GM12878 (cell line): ENCODE measurements at regions of chr22 and their contacts with region 1.

Region 1: DNA sequence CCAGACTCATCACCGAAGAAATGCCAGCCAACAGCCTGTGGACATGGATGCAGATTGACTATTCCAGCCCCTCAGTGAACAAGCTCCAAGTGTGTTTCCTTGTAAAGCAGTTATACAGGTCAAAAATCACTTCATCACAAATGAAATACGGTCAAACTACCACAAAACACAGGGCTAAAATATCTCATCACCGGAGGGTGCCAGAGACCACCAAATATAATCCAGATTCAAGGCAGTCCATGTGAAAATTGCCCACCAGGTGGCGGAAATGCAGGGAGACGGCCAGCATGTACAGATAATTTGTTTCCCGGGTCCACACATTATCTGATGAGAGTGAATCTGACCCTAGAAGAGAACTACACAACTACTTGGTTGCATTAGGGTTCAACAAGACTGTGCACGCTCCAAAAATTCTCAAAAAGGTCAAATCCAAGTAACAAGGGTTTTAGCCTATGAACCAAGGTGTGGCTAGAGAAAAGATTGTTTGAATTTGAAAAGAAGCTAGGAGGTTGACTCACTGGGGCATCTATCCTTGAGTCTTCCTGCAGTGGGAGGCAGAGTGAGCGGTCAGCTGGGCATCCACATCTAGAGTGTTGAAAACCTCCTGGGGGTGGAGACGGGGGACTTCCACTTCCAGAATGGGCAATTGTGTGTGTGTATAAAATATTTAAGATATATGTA is 71.7 kb downstream of the IGLL5 start:
- DNase-seq: peak; percentile 56
- ATAC-seq: peak; percentile 66
- H3K4me3 ChIP-seq: no peak overlapping the region
- H3K27ac ChIP-seq: no peak overlapping the region
- H3K4me1 ChIP-seq: peaks cover 11% of the 10 kb centered on the region
- H3K27me3 ChIP-seq: no peaks in the 10 kb centered on the region
- CTCF ChIP-seq: peak; percentile 81 to 100 (median 95); a peak in 5 of 6 replicates
- EP300 ChIP-seq: no peak
- POLR2A ChIP-seq: no peak
- RAD21 ChIP-seq: peak; percentile 100

Region 2: DNA sequence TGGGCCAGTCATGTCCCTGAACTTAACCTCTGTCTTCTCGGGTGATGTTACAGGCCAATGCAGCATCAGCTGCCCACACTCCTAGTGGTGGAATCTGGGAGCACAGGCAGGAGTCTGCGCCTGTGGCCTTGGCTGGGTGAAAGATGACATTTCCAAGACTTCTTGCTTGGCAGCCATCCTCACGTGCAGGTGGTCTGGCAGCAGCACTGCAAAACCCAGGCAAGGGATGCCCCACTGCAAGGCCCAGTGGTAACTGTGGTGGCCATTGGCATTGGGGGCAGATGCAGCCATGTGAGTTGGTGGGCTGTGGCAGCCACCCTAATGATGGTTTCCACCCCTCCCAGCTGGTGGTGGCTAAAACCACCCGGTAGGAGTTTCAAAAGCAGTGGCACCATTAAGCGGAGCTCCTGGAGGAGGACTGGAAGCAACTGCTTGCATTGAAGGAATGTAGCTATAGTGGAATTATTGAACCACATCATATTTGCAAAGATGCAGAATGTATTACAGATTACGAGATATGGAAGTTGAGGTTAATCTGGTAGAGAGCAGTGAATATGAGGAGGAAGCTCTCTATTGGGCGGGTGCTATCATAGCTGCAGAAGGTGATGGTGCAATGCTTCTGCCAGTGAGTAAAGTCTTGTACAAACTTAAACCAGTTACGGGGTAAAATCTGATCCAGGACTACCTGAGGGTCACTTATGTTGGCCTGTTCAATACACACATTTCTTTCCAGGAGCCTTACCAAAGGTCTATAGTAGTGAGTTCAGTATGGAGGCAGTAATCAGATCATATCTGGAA is 856.0 kb before region 1 on chr22:
- CTCF ChIA-PET with region 1: interaction called, 23 read pairs
- POLR2A ChIA-PET with region 1: no interaction called
- RAD21 ChIA-PET with region 1: interaction called, 20 read pairs
- SMC1A ChIA-PET with region 1: interaction called, 43 read pairs
- in situ Hi-C with region 1: no loop called
- intact Hi-C with region 1: no loop called
- DNase-seq: no peak
- ATAC-seq: 0 out of 3 replicates have a peak, but pooled peaks have one; percentile 18
- H3K4me3 ChIP-seq: no peak overlapping the region
- H3K27ac ChIP-seq: no peak overlapping the region
- H3K4me1 ChIP-seq: peaks cover 9% of the 10 kb centered on the region
- H3K27me3 ChIP-seq: no peaks in the 10 kb centered on the region
- CTCF ChIP-seq: peak; percentile 17 to 60 (median 30); a peak in 5 of 6 replicates
- EP300 ChIP-seq: no peak
- POLR2A ChIP-seq: no peak
- RAD21 ChIP-seq: no peak

Region 3: GRCh38 chr22:22748297-22748743 is 211.0 kb before region 1 on chr22:
- CTCF ChIA-PET with region 1: interaction called, 86 read pairs
- POLR2A ChIA-PET with region 1: interaction called, 4 read pairs
- RAD21 ChIA-PET with region 1: interaction called, 41 read pairs
- SMC1A ChIA-PET with region 1: interaction called, 27 read pairs
- in situ Hi-C with region 1: no loop called
- intact Hi-C with region 1: loop called (anchors 1 kb)
- DNase-seq: no peak
- ATAC-seq: peak; percentile 79
- H3K4me3 ChIP-seq: no peak overlapping the region
- H3K27ac ChIP-seq: no peak overlapping the region
- H3K4me1 ChIP-seq: no peaks in the 10 kb centered on the region; the same call in 1 of the 2 replicates
- H3K27me3 ChIP-seq: no peaks in the 10 kb centered on the region
- CTCF ChIP-seq: peak; percentile 47 to 60 (median 56)
- EP300 ChIP-seq: no peak
- POLR2A ChIP-seq: no peak
- RAD21 ChIP-seq: no peak

Region 4: DNA sequence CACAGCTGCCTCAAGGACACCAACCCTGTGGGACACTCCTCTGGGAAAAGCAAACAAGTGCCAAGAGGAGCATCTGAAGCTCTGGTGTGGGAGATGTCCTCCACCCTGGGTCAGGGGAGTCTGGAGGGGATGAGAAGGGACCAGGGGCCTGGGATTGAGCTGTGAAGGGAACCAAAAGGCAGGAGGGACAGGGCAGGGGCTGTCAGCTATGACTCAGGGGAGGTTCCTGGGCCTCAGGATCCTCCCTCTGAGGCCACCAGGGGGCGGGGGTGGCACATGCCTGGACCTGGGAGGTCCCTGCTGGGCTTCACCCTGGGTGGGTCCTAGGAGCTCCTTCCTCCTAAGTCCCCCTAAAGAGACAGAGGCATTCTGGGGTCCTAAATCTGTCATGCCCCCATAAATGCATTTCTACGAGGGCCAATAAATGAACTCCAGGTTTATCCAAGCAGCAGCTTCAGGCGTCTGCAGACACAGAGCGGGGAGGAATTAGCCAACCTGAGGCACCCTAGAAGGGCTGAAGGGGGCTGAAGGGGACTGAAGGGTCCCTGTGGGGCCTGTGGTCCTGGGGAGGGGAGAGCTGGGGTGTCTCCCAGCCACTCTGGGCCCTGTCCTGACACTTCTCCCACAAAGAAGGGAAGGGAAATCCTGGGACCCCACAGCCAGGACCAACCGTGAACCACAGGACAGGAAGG is 103.5 kb before region 1 on chr22:
- CTCF ChIA-PET with region 1: interaction called, 264 read pairs
- POLR2A ChIA-PET with region 1: interaction called, 9 read pairs
- RAD21 ChIA-PET with region 1: interaction called, 174 read pairs
- SMC1A ChIA-PET with region 1: interaction called, 201 read pairs
- in situ Hi-C with region 1: no loop called
- intact Hi-C with region 1: no loop called
- DNase-seq: no peak
- ATAC-seq: peak; percentile 95
- H3K4me3 ChIP-seq: no peak overlapping the region
- H3K27ac ChIP-seq: peak overlapping the region; percentile 73
- H3K4me1 ChIP-seq: no peaks in the 10 kb centered on the region
- H3K27me3 ChIP-seq: no peaks in the 10 kb centered on the region
- CTCF ChIP-seq: peak; percentile 27 to 70 (median 60); a peak in 5 of 6 replicates
- EP300 ChIP-seq: no peak
- POLR2A ChIP-seq: no peak
- RAD21 ChIP-seq: no peak

Region 5: GRCh38 chr22:23029521-23030228 is 70.4 kb after region 1 on chr22:
- CTCF ChIA-PET with region 1: interaction called, 20 read pairs
- POLR2A ChIA-PET with region 1: no interaction called
- RAD21 ChIA-PET with region 1: no interaction called
- SMC1A ChIA-PET with region 1: interaction called, 8 read pairs
- in situ Hi-C with region 1: no loop called
- intact Hi-C with region 1: no loop called
- DNase-seq: no peak
- ATAC-seq: no peak
- H3K4me3 ChIP-seq: no peak overlapping the region
- H3K27ac ChIP-seq: no peak overlapping the region
- H3K4me1 ChIP-seq: no peaks in the 10 kb centered on the region
- H3K27me3 ChIP-seq: no peaks in the 10 kb centered on the region
- CTCF ChIP-seq: no peak
- EP300 ChIP-seq: no peak
- POLR2A ChIP-seq: no peak
- RAD21 ChIP-seq: no peak

Region 6: DNA sequence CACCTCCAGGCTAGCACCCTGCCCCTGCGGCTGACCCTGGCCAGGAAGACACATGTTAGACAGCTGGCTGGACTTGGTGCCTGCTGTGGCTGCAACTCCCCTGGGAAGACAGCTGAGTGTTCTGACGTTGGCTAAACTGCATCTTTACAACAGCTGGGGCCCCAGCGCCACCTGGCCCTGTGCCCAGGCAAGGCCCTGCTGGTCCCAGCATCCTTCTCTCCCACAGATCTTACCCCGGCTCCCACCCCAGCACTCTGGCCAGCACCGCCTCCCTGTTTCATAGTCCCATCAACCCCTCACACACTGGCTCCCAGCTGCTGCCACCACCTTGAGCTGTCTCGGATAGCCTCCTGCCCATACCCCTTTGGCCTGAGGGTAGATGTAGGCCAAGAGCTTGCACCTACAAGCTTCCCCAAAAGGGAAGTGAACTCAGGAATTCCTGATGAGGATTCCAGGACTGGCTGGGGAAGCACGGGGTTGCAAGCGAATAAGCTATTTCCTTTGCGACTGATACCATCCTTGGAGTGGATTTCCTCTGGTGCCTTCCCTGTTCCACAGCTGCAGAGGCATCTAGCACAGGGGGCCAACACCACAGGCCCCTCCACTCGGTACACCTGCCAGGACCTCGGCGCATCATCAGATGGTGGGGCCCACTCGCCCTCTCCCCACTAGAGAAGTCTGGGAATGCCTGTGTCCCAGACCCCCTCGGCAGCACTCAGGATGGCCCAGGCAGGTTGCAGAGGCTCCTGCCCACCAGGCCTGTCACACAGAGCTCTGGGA is 154.0 kb after region 1 on chr22:
- CTCF ChIA-PET with region 1: interaction called, 211 read pairs
- POLR2A ChIA-PET with region 1: no interaction called
- RAD21 ChIA-PET with region 1: interaction called, 281 read pairs
- SMC1A ChIA-PET with region 1: interaction called, 82 read pairs
- in situ Hi-C with region 1: no loop called
- intact Hi-C with region 1: no loop called
- DNase-seq: no peak
- ATAC-seq: peak; percentile 58
- H3K4me3 ChIP-seq: no peak overlapping the region
- H3K27ac ChIP-seq: no peak overlapping the region
- H3K4me1 ChIP-seq: no peaks in the 10 kb centered on the region
- H3K27me3 ChIP-seq: no peaks in the 10 kb centered on the region
- CTCF ChIP-seq: no peak
- EP300 ChIP-seq: no peak
- POLR2A ChIP-seq: no peak
- RAD21 ChIP-seq: no peak

Region 7: GRCh38 chr22:23376256-23376655 is 417.0 kb after region 1 on chr22:
- CTCF ChIA-PET with region 1: interaction called, 22 read pairs
- POLR2A ChIA-PET with region 1: no interaction called
- RAD21 ChIA-PET with region 1: interaction called, 6 read pairs
- SMC1A ChIA-PET with region 1: interaction called, 15 read pairs
- in situ Hi-C with region 1: loop called (anchors 10 kb)
- intact Hi-C with region 1: no loop called
- DNase-seq: peak; percentile 1
- ATAC-seq: peak; percentile 100
- H3K4me3 ChIP-seq: no peak overlapping the region
- H3K27ac ChIP-seq: no peak overlapping the region
- H3K4me1 ChIP-seq: no peaks in the 10 kb centered on the region
- H3K27me3 ChIP-seq: no peaks in the 10 kb centered on the region
- CTCF ChIP-seq: peak; percentile 63 to 67 (median 65)
- EP300 ChIP-seq: no peak
- POLR2A ChIP-seq: no peak
- RAD21 ChIP-seq: peak; percentile 35; the same call in 1 of the 2 replicates